ENCODE measurements at regions of chr19 and their contacts with region 1.

Region 1: DNA sequence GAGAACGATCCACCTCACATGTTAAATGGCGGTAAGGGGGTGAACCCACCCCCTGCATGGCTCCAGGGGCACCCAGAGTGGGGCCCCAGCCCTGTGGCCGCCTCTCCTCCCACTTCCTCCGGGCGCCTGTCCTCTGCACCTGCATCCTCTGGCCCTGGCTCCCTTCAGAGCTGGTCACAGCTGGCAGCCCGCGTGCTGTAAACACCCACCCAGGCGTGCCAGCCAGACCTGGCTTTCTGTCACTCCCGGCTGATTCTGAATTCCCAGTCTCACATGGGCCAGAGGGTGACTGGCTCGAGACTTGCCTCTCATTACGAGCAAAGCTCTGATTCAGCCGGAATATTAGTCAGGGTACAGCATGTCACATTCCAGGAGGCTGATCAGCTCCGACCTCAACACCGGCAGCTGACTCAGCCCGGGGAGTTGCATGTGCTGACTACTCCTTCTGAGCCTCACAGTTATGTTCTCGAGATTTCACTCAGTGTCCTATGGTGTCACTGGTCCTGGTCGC is 75.1 kb downstream of the GNG7 start:
- DNase-seq: peak; percentile 96 to 98 (median 97)
- H3K4me3 ChIP-seq: peak overlapping the region in 1 of 3 experiments; percentile 7
- H3K4me3 Mint-ChIP-seq: peak overlapping the region; percentile 24 to 75
- H3K27ac ChIP-seq: peak overlapping the region; percentile 79 to 97
- H3K27ac Mint-ChIP-seq: peak overlapping the region; percentile 93 to 99 (median 98)
- H3K4me1 ChIP-seq: peaks cover 75 to 85% of the 10 kb centered on the region in 2 donors
- H3K4me1 Mint-ChIP-seq: peaks cover 69% of the 10 kb centered on the region
- H3K27me3 ChIP-seq: no peaks in the 10 kb centered on the region
- H3K27me3 Mint-ChIP-seq: peaks cover 0 to 13% (median 2%) of the 10 kb centered on the region in 3 donors
- CTCF ChIP-seq: no peak

Region 2: GRCh38 chr19:2549701-2550191 is 77.6 kb before region 1 on chr19:
- intact Hi-C with region 1: loop called in 1 of 2 experiments (anchors 5 kb)
- DNase-seq: peak; percentile 94 to 98 (median 96)
- H3K4me3 ChIP-seq: peak overlapping the region in 1 of 3 experiments; percentile 19
- H3K4me3 Mint-ChIP-seq: peak overlapping the region; percentile 68 to 81
- H3K27ac ChIP-seq: peak overlapping the region; percentile 67 to 70
- H3K27ac Mint-ChIP-seq: peak overlapping the region; percentile 92 to 98 (median 97)
- H3K4me1 ChIP-seq: peaks cover 49 to 51% of the 10 kb centered on the region in 2 donors
- H3K4me1 Mint-ChIP-seq: peaks cover 47% of the 10 kb centered on the region
- H3K27me3 ChIP-seq: no peaks in the 10 kb centered on the region
- H3K27me3 Mint-ChIP-seq: peaks cover 0 to 7% (median 2%) of the 10 kb centered on the region in 3 donors
- CTCF ChIP-seq: no peak

Region 3: GRCh38 chr19:2578901-2579677 is 48.3 kb before region 1 on chr19:
- intact Hi-C with region 1: loop called in 1 of 2 experiments (anchors 5 kb)
- DNase-seq: peak; percentile 66 to 81 (median 70)
- H3K4me3 ChIP-seq: peak overlapping the region in 2 of 3 experiments; percentile 26 to 69
- H3K4me3 Mint-ChIP-seq: peak overlapping the region; percentile 54 to 80
- H3K27ac ChIP-seq: no peak overlapping the region
- H3K27ac Mint-ChIP-seq: peak overlapping the region in 1 of 7 donors; percentile 57
- H3K4me1 ChIP-seq: peaks cover 12 to 14% of the 10 kb centered on the region in 2 donors
- H3K4me1 Mint-ChIP-seq: peaks cover 17% of the 10 kb centered on the region
- H3K27me3 ChIP-seq: peaks cover 0 to 9% of the 10 kb centered on the region in 2 donors
- H3K27me3 Mint-ChIP-seq: peaks cover 7 to 19% (median 9%) of the 10 kb centered on the region in 3 donors
- CTCF ChIP-seq: peak; percentile 97

Region 4: GRCh38 chr19:2610637-2611482 is 16.5 kb before region 1 on chr19:
- intact Hi-C with region 1: loop called (anchors 2 kb)
- DNase-seq: peak; percentile 67 to 83 (median 81)
- H3K4me3 ChIP-seq: peak overlapping the region; percentile 36 to 81 (median 71)
- H3K4me3 Mint-ChIP-seq: peak overlapping the region; percentile 88 to 95
- H3K27ac ChIP-seq: peak overlapping the region in 1 of 2 donors; percentile 62
- H3K27ac Mint-ChIP-seq: peak overlapping the region in 6 of 7 donors; percentile 53 to 90 (median 77)
- H3K4me1 ChIP-seq: peaks cover 29 to 42% of the 10 kb centered on the region in 2 donors
- H3K4me1 Mint-ChIP-seq: peaks cover 36% of the 10 kb centered on the region
- H3K27me3 ChIP-seq: no peaks in the 10 kb centered on the region
- H3K27me3 Mint-ChIP-seq: peaks cover 2 to 4% (median 2%) of the 10 kb centered on the region in 3 donors
- CTCF ChIP-seq: peak; percentile 96

Region 5: GRCh38 chr19:2992958-2993357 is 365.6 kb after region 1 on chr19:
- intact Hi-C with region 1: no loop called
- DNase-seq: no peak
- H3K4me3 ChIP-seq: no peak overlapping the region
- H3K4me3 Mint-ChIP-seq: no peak overlapping the region
- H3K27ac ChIP-seq: no peak overlapping the region
- H3K27ac Mint-ChIP-seq: no peak overlapping the region
- H3K4me1 ChIP-seq: no peaks in the 10 kb centered on the region
- H3K4me1 Mint-ChIP-seq: no peaks in the 10 kb centered on the region
- H3K27me3 ChIP-seq: no peaks in the 10 kb centered on the region
- H3K27me3 Mint-ChIP-seq: peaks cover 5 to 13% (median 10%) of the 10 kb centered on the region in 3 donors
- CTCF ChIP-seq: no peak

Measured in CD14-positive monocyte (primary cell).